ENCODE measurements at regions of chr5 and their contacts with region 1.

Region 1: DNA sequence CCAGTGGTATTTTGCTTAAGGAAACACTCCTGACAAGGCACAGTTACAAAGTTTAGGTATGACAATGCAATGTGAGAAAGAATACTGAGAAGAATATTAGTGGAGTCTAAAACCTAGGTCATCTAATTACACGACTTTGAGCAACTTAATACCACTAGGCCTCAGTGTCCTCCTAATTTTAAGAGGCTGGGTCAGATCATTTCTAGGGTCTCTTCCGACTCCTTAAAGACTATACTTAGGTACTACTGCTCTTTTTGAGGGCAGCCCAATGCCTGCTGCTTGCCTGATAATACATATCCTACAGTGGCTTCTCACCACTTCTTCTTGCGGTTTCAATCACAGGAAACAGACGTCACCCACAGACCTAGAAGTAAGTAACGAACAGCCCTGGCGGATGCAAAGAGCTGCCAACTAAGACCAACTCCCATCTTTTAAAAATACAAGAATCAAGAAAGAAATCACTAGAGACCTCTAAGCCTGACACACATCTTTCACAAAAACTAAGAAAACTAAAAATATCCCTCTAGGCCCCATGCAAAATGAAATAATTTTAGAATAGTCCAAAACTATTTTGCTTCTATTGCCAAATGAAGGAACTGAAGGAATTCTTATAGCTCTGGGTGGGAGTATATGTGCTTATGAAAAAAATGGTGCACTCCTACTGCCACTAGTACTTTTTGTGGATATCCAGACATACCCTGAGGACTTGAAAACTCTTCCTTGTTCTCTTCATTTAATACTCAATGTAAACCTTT is 13.1 kb downstream of the DIAPH1 start:
- DNase-seq: peak; percentile 87
- ATAC-seq: peak; percentile 94
- H3K4me3 ChIP-seq: peak overlapping the region; percentile 23
- H3K27ac ChIP-seq: peak overlapping the region; percentile 77
- H3K4me1 ChIP-seq: peaks cover 34% of the 10 kb centered on the region
- H3K27me3 ChIP-seq: no peaks in the 10 kb centered on the region
- CTCF ChIP-seq: no peak
- EP300 ChIP-seq: peak; percentile 58 to 81
- POLR2A ChIP-seq: no peak
- RAD21 ChIP-seq: 0 out of 2 replicates have a peak, but pooled peaks have one; percentile 7

Region 2: DNA sequence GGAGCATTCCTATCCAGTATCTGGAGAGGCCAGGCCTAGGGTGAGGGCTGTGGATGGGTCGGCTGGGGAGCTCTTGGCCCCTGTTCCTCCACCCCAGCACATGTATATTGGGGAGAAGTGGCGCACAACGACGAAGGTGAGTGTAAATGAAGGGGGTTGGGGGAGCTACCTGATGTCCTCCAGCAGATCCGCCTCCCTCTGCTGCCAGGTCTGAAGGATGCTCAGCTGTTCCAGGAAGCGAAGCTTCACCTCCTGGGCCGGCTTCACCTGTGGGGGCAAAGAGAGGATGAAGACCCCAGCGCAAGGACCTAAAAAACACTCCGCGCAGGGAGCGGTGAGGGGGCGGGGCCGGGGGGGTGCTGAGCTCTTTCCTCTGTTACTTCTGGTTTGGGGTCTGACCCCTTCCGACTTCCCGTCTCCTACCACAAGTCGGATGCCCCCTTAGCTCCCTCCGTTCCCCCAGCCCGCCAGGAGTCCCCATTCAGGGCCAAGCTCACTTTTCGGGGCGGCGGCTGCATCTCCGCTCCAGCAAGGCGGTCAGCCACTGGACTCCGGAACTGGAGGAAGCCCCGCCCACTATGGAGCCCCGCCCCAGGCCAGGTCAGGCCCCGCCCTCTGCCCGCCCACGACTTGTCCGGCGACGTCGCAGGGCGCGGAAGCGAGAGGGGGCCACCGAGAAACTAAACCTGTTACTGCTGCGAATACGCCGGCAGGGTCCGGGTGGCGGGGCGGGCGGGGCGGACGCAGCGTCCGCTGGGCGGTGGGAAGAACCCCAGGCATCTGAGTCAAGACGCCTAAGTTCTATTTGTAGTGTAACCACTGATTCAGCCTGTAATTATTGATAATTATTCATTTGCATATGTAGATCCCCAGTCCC is 45.4 kb after region 1 on chr5 and contains the start of gene FCHSD1:
- CTCF ChIA-PET with region 1: interaction called, 4 read pairs
- POLR2A ChIA-PET with region 1: interaction called, 12 read pairs
- RAD21 ChIA-PET with region 1: no interaction called
- SMC1A ChIA-PET with region 1: no interaction called
- in situ Hi-C with region 1: no loop called
- intact Hi-C with region 1: no loop called
- DNase-seq: no peak
- ATAC-seq: peak; percentile 99
- H3K4me3 ChIP-seq: peak within 1 kb of the TSS; percentile 85
- H3K27ac ChIP-seq: peak within 1 kb of the TSS; percentile 51
- H3K4me1 ChIP-seq: peaks cover 8% of the 10 kb centered on the region
- H3K27me3 ChIP-seq: no peaks in the 10 kb centered on the region
- CTCF ChIP-seq: no peak
- EP300 ChIP-seq: no peak
- POLR2A ChIP-seq: peak; percentile 80
- RAD21 ChIP-seq: no peak
- polyA plus RNA-seq, gene FCHSD1: 0.97 to 1.0 TPM